CD8-positive, alpha-beta T cell (primary cell): ENCODE measurements at regions of chr13 and their contacts with region 1.

Region 1: DNA sequence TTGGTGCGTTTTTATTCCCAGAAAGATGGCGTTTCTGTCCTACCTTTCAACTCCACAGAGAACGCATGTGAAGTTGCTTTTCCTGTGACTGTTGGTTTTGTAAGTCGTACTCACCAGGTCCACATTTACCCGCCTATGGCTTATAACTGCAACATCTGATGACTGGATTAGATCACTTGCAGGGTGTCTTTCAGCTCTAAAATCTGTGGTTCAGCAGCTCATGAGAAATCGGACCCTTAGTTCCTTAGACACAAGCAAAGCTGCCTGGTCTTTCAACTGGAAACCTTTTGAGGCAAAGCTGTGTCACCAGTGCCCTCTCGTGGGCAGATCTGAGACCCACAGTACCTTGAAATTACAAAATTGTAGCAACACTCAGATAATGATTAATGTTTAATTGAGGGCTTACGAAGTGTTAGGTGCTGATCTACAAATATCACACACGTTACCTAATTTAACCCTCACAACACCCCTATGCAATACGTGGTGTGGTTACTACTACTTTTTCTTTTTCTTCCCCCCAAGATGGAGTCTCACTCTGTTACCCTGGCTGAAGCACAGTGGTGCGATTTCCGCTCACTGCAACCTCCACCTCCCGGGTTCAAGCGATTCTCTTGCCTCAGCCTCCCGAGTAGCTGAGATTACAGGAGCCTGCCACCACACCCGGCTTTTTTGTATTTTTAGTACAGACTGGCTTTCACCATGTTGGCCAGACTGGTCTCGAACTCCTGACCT is 65.4 kb downstream of the RUBCNL start:
- DNase-seq: peak; percentile 55 to 88 (median 76)
- ATAC-seq: peak; percentile 89
- H3K4me3 ChIP-seq: peak overlapping the region; percentile 6 to 35
- H3K4me3 Mint-ChIP-seq: peak overlapping the region; percentile 73
- H3K27ac ChIP-seq: peak overlapping the region; percentile 46 to 66
- H3K27ac Mint-ChIP-seq: peak overlapping the region; percentile 93
- H3K4me1 ChIP-seq: peaks cover 14% of the 10 kb centered on the region
- H3K4me1 Mint-ChIP-seq: peaks cover 44% of the 10 kb centered on the region
- H3K27me3 ChIP-seq: no peaks in the 10 kb centered on the region
- H3K27me3 Mint-ChIP-seq: no peaks in the 10 kb centered on the region
- CTCF ChIP-seq: peak; percentile 92

Region 2: DNA sequence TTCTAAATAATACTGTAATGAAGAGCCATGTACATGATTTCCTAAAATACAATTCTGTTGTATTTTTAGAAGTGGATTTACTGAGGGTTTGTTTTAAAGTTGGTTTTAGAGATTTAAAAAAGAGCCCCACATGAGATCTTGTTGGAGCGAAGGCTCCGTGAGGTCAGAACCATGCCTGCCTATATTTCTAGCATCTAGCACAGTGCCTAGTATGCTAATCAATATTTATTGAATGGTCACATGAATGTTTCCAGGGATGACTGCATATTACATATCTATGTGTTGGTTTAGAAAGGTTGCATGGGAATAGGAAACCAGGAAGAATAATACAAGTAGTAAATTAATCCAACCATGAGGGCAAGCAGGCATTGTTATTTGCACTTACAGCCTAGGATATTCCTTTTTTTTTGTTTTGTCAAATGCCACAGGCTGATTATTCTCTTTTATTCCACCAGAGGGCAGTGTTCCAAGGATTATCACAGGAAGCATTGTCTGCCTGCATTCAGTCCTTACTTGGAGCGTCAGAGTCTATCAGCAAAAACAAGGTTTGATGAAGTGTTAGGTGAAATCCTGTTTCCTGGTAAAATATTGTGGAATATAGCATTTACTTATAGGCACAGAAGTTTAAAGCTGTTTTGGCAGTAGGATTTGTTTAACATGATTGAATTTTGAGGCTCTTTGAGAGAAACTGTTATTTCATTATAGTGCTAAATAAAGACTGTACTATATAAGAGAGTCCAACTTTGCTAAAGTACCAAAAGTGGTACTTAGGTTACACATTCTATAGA is 810.2 kb before region 1 on chr13:
- CTCF ChIA-PET with region 1: interaction called, 8 read pairs
- POLR2A ChIA-PET with region 1: no interaction called
- intact Hi-C with region 1: loop called (anchors 1 to 2 kb)
- DNase-seq: peak in 5 of 9 experiments; percentile 20 to 80 (median 26)
- ATAC-seq: peak; percentile 95
- H3K4me3 ChIP-seq: no peak overlapping the region
- H3K4me3 Mint-ChIP-seq: no peak overlapping the region
- H3K27ac ChIP-seq: no peak overlapping the region
- H3K27ac Mint-ChIP-seq: peak overlapping the region; percentile 52
- H3K4me1 ChIP-seq: no peaks in the 10 kb centered on the region
- H3K4me1 Mint-ChIP-seq: peaks cover 8% of the 10 kb centered on the region
- H3K27me3 ChIP-seq: no peaks in the 10 kb centered on the region
- H3K27me3 Mint-ChIP-seq: no peaks in the 10 kb centered on the region
- CTCF ChIP-seq: peak; percentile 85

Region 3: GRCh38 chr13:45974500-45974899 is 347.2 kb before region 1 on chr13:
- CTCF ChIA-PET with region 1: no interaction called
- POLR2A ChIA-PET with region 1: no interaction called
- intact Hi-C with region 1: loop called in 1 of 2 experiments (anchors 10 kb)
- DNase-seq: no peak
- ATAC-seq: no peak
- H3K4me3 ChIP-seq: no peak overlapping the region
- H3K4me3 Mint-ChIP-seq: no peak overlapping the region
- H3K27ac ChIP-seq: no peak overlapping the region
- H3K27ac Mint-ChIP-seq: no peak overlapping the region
- H3K4me1 ChIP-seq: no peaks in the 10 kb centered on the region
- H3K4me1 Mint-ChIP-seq: peaks cover 6% of the 10 kb centered on the region
- H3K27me3 ChIP-seq: no peaks in the 10 kb centered on the region
- H3K27me3 Mint-ChIP-seq: no peaks in the 10 kb centered on the region
- CTCF ChIP-seq: no peak

Region 4: GRCh38 chr13:46160471-46161066 is 161.1 kb before region 1 on chr13:
- CTCF ChIA-PET with region 1: interaction called, 14 read pairs
- POLR2A ChIA-PET with region 1: interaction called, 6 read pairs
- intact Hi-C with region 1: loop called (anchors 1 kb)
- DNase-seq: peak in 3 of 9 experiments; percentile 41 to 92 (median 85)
- ATAC-seq: peak; percentile 76
- H3K4me3 ChIP-seq: no peak overlapping the region
- H3K4me3 Mint-ChIP-seq: peak overlapping the region; percentile 73
- H3K27ac ChIP-seq: peak overlapping the region in 1 of 2 experiments; percentile 77
- H3K27ac Mint-ChIP-seq: peak overlapping the region; percentile 94
- H3K4me1 ChIP-seq: peaks cover 45% of the 10 kb centered on the region
- H3K4me1 Mint-ChIP-seq: peaks cover 55% of the 10 kb centered on the region
- H3K27me3 ChIP-seq: no peaks in the 10 kb centered on the region
- H3K27me3 Mint-ChIP-seq: no peaks in the 10 kb centered on the region
- CTCF ChIP-seq: peak; percentile 79

Region 5: GRCh38 chr13:46211483-46212351 is 109.9 kb before region 1 on chr13 and contains the start of gene LRRC63:
- CTCF ChIA-PET with region 1: interaction called, 4 read pairs
- POLR2A ChIA-PET with region 1: no interaction called
- intact Hi-C with region 1: loop called (anchors 2 to 5 kb)
- DNase-seq: peak; percentile 58 to 91 (median 84)
- ATAC-seq: peak; percentile 92
- H3K4me3 ChIP-seq: peak within 1 kb of the TSS; percentile 69 to 73
- H3K4me3 Mint-ChIP-seq: peak within 1 kb of the TSS; percentile 86
- H3K27ac ChIP-seq: peak within 1 kb of the TSS; percentile 74 to 90
- H3K27ac Mint-ChIP-seq: peak within 1 kb of the TSS; percentile 93
- H3K4me1 ChIP-seq: peaks cover 13% of the 10 kb centered on the region
- H3K4me1 Mint-ChIP-seq: peaks cover 19% of the 10 kb centered on the region
- H3K27me3 ChIP-seq: no peaks in the 10 kb centered on the region
- H3K27me3 Mint-ChIP-seq: no peaks in the 10 kb centered on the region
- CTCF ChIP-seq: no peak
- total RNA-seq, gene LRRC63: 0.22 to 0.31 TPM

Region 6: DNA sequence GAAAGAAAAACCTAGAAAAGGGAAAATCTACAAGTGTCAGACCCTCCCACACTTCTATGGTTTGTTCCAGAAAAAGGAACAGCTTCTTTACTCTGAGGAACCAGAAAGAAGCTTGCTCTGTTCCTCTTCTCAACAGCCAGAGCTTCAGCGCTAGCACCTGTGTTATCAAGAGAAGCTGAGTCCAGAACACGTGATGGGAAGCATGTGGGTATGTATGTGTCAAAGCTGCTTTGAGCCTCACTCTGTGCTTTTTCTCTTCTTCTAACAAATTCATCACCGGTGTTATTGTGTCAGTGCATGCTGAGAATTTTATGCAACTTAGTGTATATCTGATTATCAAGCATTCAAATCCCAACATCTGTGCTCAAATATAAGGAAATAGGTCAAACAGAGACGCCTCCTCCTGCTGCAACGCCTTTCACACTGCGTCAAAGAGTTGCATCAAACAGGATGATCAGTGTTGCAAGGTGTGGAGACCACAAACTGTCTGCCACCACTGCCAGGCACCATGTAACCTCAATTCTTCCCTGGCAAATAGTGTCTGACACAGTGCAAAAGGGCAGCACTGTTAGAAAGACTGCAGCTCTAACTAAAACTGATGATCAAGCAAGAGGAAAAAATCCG is 26.1 kb before region 1 on chr13:
- CTCF ChIA-PET with region 1: interaction called, 97 read pairs
- POLR2A ChIA-PET with region 1: interaction called, 25 read pairs
- intact Hi-C with region 1: loop called (anchors 1 to 2 kb)
- DNase-seq: peak; percentile 46 to 96 (median 70)
- ATAC-seq: peak; percentile 81
- H3K4me3 ChIP-seq: peak overlapping the region; percentile 11 to 16
- H3K4me3 Mint-ChIP-seq: peak overlapping the region; percentile 60
- H3K27ac ChIP-seq: peak overlapping the region; percentile 69 to 79
- H3K27ac Mint-ChIP-seq: peak overlapping the region; percentile 96
- H3K4me1 ChIP-seq: peaks cover 49% of the 10 kb centered on the region
- H3K4me1 Mint-ChIP-seq: peaks cover 65% of the 10 kb centered on the region
- H3K27me3 ChIP-seq: no peaks in the 10 kb centered on the region
- H3K27me3 Mint-ChIP-seq: no peaks in the 10 kb centered on the region
- CTCF ChIP-seq: no peak